Activated CD4-positive, alpha-beta T cell treated with anti-CD3 and anti-CD28 coated beads, Interleukin-2, amount 10 ng/mL, durations not matched to agents 7 days and 5 days (primary cell): ENCODE measurements at regions of chr12 and their contacts with region 1.

Region 1: GRCh38 chr12:51874486-51874885 is 13.4 kb upstream of the ANKRD33 start:
- DNase-seq: no peak
- H3K4me3 Mint-ChIP-seq: no peak overlapping the region
- H3K27ac Mint-ChIP-seq: no peak overlapping the region
- H3K4me1 Mint-ChIP-seq: peaks cover 5% of the 10 kb centered on the region
- H3K27me3 Mint-ChIP-seq: peaks cover 18% of the 10 kb centered on the region

Region 2: DNA sequence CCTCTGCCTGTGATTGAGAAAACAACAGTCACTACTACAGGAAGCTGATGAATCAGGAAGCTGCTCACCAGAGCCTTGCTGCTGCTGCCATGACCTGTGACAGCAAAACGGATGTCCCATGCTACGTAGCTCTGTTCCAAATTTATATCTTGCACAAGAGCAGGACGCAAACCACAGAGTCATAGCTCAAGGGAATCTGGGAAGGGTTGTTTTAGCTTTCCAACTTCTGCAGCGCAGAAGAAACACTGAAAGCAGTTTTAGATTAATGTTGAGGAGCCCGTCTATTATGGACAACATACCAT is 11.5 kb after region 1 on chr12:
- CTCF ChIA-PET with region 1: interaction called, 12 read pairs
- POLR2A ChIA-PET with region 1: no interaction called
- DNase-seq: peak; percentile 68
- H3K4me3 Mint-ChIP-seq: peak overlapping the region; percentile 25
- H3K27ac Mint-ChIP-seq: peak overlapping the region; percentile 93
- H3K4me1 Mint-ChIP-seq: peaks cover 21% of the 10 kb centered on the region
- H3K27me3 Mint-ChIP-seq: no peaks in the 10 kb centered on the region